HAP-1 (cell line): ENCODE measurements at regions of chr7 and their contacts with region 1.

Region 1: GRCh38 chr7:88546808-88547207 is 212.7 kb upstream of the ZNF804B start:
- DNase-seq: peak; percentile 58 to 85
- H3K4me3 ChIP-seq: no peak overlapping the region
- H3K4me1 ChIP-seq: peaks cover 4% of the 10 kb centered on the region
- H3K27me3 ChIP-seq: no peaks in the 10 kb centered on the region

Region 2: GRCh38 chr7:88243345-88243909 is 303.4 kb before region 1 on chr7:
- in situ Hi-C with region 1: loop called (anchors 25 kb)
- DNase-seq: peak; percentile 39 to 79
- H3K4me3 ChIP-seq: no peak overlapping the region
- H3K4me1 ChIP-seq: peaks cover 4% of the 10 kb centered on the region
- H3K27me3 ChIP-seq: no peaks in the 10 kb centered on the region

Region 3: GRCh38 chr7:88377434-88377833 is 169.4 kb before region 1 on chr7:
- in situ Hi-C with region 1: no loop called
- DNase-seq: peak; percentile 38 to 43
- H3K4me3 ChIP-seq: no peak overlapping the region
- H3K4me1 ChIP-seq: peaks cover 7% of the 10 kb centered on the region
- H3K27me3 ChIP-seq: no peaks in the 10 kb centered on the region

Region 4: GRCh38 chr7:89622838-89623672 is 1076.2 kb after region 1 on chr7:
- in situ Hi-C with region 1: loop called (anchors 25 kb)
- DNase-seq: peak; percentile 47 to 66
- H3K4me3 ChIP-seq: no peak overlapping the region
- H3K4me1 ChIP-seq: no peaks in the 10 kb centered on the region
- H3K27me3 ChIP-seq: no peaks in the 10 kb centered on the region